AG04450 (cell line): ENCODE measurements at regions of chr16 and their contacts with region 1.

Region 1: GRCh38 chr16:11105038-11105903 is 150.7 kb downstream of the SOCS1 start:
- DNase-seq: peak; percentile 87
- H3K4me3 ChIP-seq: no peak overlapping the region
- H3K27ac ChIP-seq: peak overlapping the region; percentile 94
- H3K27me3 ChIP-seq: no peaks in the 10 kb centered on the region
- CTCF ChIP-seq: no peak

Region 2: GRCh38 chr16:11089504-11090124 is 15.7 kb before region 1 on chr16:
- CTCF ChIA-PET with region 1: interaction called, 7 read pairs
- POLR2A ChIA-PET with region 1: interaction called, 14 read pairs
- DNase-seq: peak; percentile 98
- H3K4me3 ChIP-seq: no peak overlapping the region
- H3K27ac ChIP-seq: peak overlapping the region; percentile 97
- H3K27me3 ChIP-seq: no peaks in the 10 kb centered on the region
- CTCF ChIP-seq: no peak

Region 3: DNA sequence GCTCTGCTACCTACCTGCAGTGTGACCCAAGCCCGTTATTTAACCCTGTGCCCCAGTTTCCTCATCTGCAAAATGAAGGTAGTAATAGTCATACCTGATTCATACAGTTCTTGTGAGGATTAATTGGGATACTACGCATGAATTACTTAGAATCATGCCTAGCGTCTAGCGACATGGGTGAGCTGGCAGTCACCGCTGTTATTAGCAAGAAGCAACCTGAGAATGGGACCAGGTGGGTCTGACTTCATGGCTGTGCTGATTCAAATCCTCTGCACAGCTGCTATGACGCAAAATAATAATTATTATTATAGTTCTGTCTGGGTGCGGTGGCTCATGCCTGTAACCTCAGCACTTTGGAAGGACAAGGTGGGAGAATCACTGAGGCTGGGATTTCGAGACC is 142.9 kb after region 1 on chr16:
- CTCF ChIA-PET with region 1: no interaction called
- POLR2A ChIA-PET with region 1: interaction called, 17 read pairs
- DNase-seq: no peak
- H3K4me3 ChIP-seq: no peak overlapping the region
- H3K27ac ChIP-seq: no peak overlapping the region
- H3K27me3 ChIP-seq: no peaks in the 10 kb centered on the region
- CTCF ChIP-seq: no peak